ENCODE measurements at regions of chr1 and their contacts with region 1.

Region 1: DNA sequence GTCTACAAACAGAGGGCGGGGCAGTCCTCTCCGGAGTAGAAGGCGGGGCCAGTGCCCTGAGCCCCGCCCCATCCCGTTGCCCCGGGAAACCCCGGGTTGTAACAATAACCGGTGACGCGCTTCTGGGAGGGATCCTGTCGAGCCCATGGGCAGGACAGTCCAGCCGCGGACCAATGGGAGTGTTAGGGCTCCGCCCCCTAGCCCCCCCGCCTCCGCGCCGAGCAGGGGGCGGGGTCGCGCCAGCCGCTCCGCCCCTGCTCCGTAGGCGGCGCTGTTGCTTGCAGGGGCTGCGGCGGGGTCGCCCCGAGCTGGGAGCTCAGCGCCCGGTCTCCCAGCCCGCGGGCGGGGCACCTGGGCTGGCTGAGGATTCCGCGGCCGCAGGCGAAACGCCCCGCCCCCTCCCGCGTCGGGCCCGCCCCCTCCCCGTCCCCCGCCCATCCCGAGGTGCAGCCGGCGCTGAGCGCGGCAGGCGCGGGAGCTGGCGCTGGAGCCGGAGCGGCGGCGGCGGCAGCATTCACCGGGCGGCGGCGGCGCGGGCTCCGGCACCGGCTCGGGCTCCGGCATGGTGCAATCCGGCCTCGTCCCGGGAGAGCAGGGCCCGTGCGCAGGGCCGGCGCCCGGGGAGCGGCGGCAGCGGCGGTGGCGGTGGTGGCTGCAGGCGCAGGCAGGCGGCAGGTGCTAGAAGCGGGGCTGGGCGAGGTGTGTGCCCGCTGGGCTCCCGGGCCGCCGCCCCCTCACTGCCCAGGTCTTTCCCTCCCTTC is at the start of gene FOXO6:
- DNase-seq: peak; percentile 97 to 98
- ATAC-seq: peak; percentile 81 to 90
- H3K4me3 ChIP-seq: peak within 1 kb of the TSS; percentile 57 to 83 (median 59)
- H3K27ac ChIP-seq: peak within 1 kb of the TSS; percentile 74 to 84 (median 78)
- H3K4me1 ChIP-seq: peaks cover 39 to 56% of the 10 kb centered on the region in 2 donors
- H3K27me3 ChIP-seq: no peaks in the 10 kb centered on the region
- CTCF ChIP-seq: peak; percentile 36 to 80 (median 73)
- POLR2A ChIP-seq: peak; percentile 76 to 81
- total RNA-seq, gene FOXO6: 0.20 to 3.9 (median 0.94) TPM

Region 2: DNA sequence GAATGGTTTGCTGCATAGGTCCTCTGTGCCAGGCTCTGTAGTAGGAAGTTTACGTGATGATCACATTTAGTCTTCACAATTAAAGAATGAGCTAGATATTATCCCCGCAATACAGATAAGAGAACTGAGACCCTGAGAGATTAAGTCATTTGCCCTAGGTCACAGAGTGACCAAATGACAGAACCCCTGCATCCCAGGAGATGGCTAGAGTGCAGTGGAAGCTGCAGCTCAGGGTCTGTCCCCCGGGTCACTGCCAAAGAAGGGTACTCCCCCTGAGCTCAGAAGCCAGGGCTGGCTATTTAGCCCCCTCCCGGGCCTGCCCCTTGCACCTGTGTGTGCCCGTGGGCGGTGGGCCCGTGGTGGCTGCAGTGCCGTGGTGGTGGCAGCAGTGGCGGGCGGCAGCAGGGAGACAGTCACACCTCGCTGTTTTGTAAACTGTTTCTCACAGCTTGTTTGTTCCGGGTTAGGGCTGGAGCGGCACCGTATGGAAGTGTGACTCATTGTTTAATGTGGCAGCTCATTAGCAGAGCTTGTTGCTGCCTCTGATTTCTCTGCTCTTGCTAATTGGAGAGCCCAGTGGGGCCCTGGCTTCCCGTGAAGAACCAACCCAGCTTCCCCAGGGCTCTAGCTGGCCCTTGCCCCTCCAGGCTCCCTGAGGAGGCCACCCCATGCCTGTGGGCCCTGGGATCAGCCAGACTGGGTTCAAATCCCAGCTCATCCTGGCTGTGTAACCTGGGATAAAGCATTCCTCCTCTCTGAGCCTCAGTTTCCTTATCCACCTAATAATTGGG is 19.2 kb before region 1 on chr1:
- in situ Hi-C with region 1: no loop called
- intact Hi-C with region 1: loop called (anchors 1 kb)
- DNase-seq: peak in 1 of 2 donors; percentile 71
- ATAC-seq: peak; percentile 62 to 81
- H3K4me3 ChIP-seq: peak overlapping the region in 1 of 4 donors; percentile 6
- H3K27ac ChIP-seq: peak overlapping the region; percentile 86 to 98 (median 92)
- H3K4me1 ChIP-seq: peaks cover 33% of the 10 kb centered on the region in 2 donors
- H3K27me3 ChIP-seq: no peaks in the 10 kb centered on the region
- CTCF ChIP-seq: peak in 1 of 5 experiments; percentile 9
- POLR2A ChIP-seq: no peak

Region 3: GRCh38 chr1:41399145-41399795 is 38.1 kb after region 1 on chr1:
- in situ Hi-C with region 1: no loop called
- intact Hi-C with region 1: loop called (anchors 2 kb)
- DNase-seq: peak; percentile 35 to 84
- ATAC-seq: peak; percentile 61 to 83
- H3K4me3 ChIP-seq: peak overlapping the region in 3 of 4 donors; percentile 14 to 31 (median 23)
- H3K27ac ChIP-seq: peak overlapping the region; percentile 36 to 81 (median 78)
- H3K4me1 ChIP-seq: peaks cover 34 to 41% of the 10 kb centered on the region in 2 donors
- H3K27me3 ChIP-seq: no peaks in the 10 kb centered on the region
- CTCF ChIP-seq: no peak
- POLR2A ChIP-seq: no peak

Region 4: DNA sequence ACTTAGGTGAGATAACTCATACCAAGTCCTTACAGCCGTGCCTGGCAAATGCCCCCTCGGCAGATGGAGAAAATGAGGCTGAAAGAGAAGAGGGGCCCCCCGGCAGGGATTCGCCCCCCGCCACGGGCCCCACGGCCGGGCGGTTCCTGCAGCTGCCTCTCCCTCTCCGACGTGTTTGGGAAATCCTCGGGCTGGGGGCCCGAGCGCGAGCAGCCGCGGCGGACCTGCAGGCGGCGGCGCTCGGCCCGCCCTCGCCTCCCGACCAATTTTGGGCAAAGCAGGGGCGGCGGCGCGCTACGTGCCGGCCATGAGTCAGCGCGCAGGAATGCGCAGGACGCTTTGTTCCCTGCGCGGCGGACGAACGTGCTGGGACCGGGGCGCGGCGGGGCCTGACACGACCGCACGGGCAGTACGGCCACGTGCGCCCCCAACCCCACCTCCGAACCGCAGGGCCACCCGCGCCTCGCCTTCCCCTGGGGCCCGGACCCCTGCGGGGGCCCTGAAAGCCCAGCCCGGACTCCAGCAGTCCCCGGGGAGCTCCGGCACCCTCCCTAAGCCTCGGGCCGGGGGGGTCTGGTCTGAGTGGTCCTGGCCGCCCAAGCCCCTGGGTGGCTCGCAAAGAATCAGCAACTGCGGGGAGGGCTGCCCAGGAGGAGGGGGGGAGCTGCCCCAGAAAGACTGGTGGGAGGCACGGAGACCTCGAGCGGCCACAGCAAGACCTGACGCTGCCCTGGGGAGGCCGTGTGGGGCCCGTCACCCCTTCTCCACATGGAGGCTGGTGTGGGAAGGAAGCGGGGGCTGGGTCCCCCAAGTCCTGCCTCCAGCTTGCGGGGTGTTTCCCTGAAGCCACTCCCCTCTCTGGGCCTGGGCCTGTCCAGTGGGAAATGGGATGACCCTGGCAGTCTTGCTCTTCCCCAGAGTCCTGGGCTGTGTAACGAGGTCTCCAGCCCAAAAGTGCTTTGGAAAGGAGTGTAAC is 135.2 kb after region 1 on chr1:
- in situ Hi-C with region 1: no loop called
- intact Hi-C with region 1: loop called (anchors 1 kb)
- DNase-seq: peak; percentile 90 to 94
- ATAC-seq: peak; percentile 55 to 63
- H3K4me3 ChIP-seq: peak overlapping the region; percentile 38 to 54 (median 42)
- H3K27ac ChIP-seq: peak overlapping the region; percentile 88 to 93 (median 90)
- H3K4me1 ChIP-seq: peaks cover 48 to 49% of the 10 kb centered on the region in 2 donors
- H3K27me3 ChIP-seq: no peaks in the 10 kb centered on the region
- CTCF ChIP-seq: peak in 3 of 5 experiments; percentile 14 to 49 (median 42)
- POLR2A ChIP-seq: peak; percentile 81 to 83

Measured in gastrocnemius medialis (tissue), 4 donors.